AG04450 (cell line): ENCODE measurements at regions of chr1 and their contacts with region 1.

Region 1: DNA sequence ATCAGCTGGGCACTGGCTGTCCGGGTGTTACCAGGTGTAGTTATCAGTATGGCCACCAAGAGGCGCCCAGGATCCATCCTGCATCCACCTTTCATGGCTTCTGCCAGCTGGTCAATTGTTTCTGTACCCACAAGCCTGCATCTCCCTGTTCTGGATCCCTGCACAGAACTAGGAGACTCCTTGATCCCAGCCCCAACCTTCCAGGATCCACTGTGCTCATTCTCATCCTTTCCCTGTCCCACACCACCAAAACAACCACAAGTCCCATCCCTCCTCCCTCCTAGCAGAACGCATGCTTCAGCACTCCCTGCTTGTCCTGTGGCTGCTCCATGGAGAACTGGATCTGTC is 27.2 kb upstream of the FOXE3 start:
- DNase-seq: no peak
- H3K4me3 ChIP-seq: no peak overlapping the region
- H3K27ac ChIP-seq: no peak overlapping the region
- H3K27me3 ChIP-seq: no peaks in the 10 kb centered on the region
- CTCF ChIP-seq: peak; percentile 92

Region 2: GRCh38 chr1:47378147-47378546 is 10.7 kb before region 1 on chr1:
- CTCF ChIA-PET with region 1: interaction called, 36 read pairs
- POLR2A ChIA-PET with region 1: interaction called, 4 read pairs
- DNase-seq: no peak
- H3K4me3 ChIP-seq: no peak overlapping the region
- H3K27ac ChIP-seq: no peak overlapping the region
- H3K27me3 ChIP-seq: no peaks in the 10 kb centered on the region
- CTCF ChIP-seq: no peak

Region 3: DNA sequence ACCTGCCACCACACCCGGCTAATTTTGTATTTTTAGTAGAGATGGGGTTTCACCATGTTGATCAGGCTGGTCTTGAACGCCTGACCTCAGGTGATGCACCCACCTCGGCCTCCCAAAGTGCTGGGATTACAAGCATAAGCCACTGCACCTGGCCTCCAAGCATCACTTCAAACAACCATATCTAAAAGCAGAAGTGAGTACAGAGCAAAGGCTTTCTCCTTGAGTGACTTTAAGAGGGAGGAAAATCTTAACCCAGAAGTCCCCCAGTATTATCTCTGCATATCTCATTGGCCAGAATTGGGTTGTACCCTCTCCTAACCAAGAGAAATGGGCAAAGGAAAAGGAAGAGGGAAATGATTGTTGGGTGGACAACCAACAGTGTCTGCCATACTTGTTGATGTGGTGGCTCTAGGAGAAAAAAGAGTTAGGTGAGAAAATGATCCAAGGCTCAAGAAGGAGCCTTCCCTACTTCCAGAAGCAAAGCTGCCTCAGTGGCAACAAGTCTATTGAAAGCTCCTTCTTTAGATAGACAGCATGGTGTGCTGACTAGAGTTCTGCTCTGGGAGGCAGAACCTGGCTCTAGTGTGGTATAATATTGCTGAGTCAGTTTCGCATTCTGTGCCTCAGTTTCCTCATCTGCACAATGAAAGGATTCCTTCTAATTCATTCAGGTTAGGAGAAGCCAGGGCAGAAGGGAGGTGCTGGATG is 10.4 kb after region 1 on chr1:
- CTCF ChIA-PET with region 1: interaction called, 11 read pairs
- POLR2A ChIA-PET with region 1: no interaction called
- DNase-seq: no peak
- H3K4me3 ChIP-seq: no peak overlapping the region
- H3K27ac ChIP-seq: no peak overlapping the region
- H3K27me3 ChIP-seq: peaks cover 4% of the 10 kb centered on the region
- CTCF ChIP-seq: no peak

Region 4: DNA sequence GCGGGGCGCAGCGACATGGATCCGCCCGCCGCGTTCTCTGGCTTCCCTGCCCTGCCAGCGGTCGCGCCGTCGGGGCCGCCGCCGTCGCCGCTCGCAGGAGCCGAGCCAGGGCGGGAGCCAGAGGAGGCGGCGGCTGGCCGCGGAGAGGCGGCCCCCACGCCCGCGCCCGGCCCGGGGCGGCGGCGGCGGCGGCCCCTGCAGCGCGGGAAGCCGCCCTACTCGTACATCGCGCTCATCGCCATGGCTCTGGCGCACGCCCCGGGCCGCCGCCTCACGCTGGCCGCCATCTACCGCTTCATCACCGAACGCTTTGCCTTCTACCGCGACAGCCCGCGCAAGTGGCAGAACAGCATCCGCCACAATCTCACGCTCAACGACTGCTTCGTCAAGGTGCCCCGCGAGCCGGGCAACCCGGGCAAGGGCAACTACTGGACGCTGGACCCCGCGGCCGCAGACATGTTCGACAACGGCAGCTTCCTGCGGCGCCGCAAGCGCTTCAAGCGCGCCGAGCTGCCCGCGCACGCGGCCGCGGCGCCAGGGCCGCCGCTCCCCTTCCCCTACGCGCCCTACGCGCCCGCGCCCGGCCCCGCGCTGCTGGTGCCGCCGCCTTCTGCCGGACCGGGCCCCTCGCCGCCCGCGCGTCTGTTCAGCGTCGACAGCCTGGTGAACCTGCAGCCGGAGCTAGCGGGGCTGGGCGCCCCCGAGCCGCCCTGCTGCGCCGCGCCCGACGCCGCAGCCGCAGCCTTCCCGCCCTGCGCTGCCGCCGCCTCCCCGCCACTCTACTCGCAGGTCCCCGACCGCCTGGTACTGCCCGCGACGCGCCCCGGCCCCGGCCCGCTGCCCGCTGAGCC is 27.7 kb after region 1 on chr1:
- CTCF ChIA-PET with region 1: interaction called, 23 read pairs
- POLR2A ChIA-PET with region 1: interaction called, 3 read pairs
- DNase-seq: no peak
- H3K4me3 ChIP-seq: peak overlapping the region; percentile 45
- H3K27ac ChIP-seq: no peak overlapping the region
- H3K27me3 ChIP-seq: peaks cover 43% of the 10 kb centered on the region
- CTCF ChIP-seq: no peak

Region 5: GRCh38 chr1:47424336-47424982 is 35.6 kb after region 1 on chr1:
- CTCF ChIA-PET with region 1: interaction called, 25 read pairs
- POLR2A ChIA-PET with region 1: no interaction called
- DNase-seq: no peak
- H3K4me3 ChIP-seq: no peak overlapping the region
- H3K27ac ChIP-seq: no peak overlapping the region
- H3K27me3 ChIP-seq: peaks cover 1% of the 10 kb centered on the region
- CTCF ChIP-seq: peak; percentile 91

Region 6: DNA sequence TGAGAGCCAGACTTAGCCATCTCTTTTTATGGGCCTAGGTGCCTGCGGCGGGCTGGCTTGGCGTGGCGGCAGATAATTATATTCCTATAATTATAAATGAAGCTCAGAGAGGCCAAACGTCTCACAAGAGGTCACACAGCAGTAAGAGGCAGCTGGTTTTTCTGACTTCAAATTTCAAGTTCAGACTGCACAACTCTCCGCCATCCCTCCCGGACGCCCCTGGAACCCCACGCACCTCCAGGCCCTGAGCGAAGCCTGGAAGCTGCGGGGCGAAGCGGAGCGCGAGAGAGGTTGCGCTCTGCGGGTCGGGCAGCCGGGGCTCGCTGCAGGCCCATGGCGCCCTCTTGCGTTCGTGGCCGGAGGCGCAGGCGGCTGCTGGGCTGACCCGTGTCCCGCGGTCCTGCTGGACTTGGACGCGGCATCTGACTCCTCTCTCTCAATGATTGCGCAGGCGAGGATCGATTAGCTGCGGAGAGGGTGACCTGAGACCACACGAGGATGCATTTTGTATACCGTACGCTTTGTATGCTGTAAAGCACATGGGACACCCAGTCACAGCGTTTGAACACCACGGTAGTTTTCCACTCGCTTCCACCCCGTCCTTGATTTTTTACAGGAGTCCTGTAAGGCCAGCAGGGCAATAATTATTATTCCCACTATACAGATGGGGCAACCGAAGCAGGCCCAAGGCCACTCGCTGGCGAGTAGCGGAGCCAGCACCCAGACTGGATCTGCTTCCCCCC is 321.6 kb after region 1 on chr1:
- CTCF ChIA-PET with region 1: interaction called, 39 read pairs
- POLR2A ChIA-PET with region 1: no interaction called
- DNase-seq: no peak
- H3K4me3 ChIP-seq: no peak overlapping the region
- H3K27ac ChIP-seq: no peak overlapping the region
- H3K27me3 ChIP-seq: peaks cover 64% of the 10 kb centered on the region
- CTCF ChIP-seq: peak; percentile 94